T-cell (primary cell): ENCODE measurements at regions of chr6 and their contacts with region 1.

Region 1: DNA sequence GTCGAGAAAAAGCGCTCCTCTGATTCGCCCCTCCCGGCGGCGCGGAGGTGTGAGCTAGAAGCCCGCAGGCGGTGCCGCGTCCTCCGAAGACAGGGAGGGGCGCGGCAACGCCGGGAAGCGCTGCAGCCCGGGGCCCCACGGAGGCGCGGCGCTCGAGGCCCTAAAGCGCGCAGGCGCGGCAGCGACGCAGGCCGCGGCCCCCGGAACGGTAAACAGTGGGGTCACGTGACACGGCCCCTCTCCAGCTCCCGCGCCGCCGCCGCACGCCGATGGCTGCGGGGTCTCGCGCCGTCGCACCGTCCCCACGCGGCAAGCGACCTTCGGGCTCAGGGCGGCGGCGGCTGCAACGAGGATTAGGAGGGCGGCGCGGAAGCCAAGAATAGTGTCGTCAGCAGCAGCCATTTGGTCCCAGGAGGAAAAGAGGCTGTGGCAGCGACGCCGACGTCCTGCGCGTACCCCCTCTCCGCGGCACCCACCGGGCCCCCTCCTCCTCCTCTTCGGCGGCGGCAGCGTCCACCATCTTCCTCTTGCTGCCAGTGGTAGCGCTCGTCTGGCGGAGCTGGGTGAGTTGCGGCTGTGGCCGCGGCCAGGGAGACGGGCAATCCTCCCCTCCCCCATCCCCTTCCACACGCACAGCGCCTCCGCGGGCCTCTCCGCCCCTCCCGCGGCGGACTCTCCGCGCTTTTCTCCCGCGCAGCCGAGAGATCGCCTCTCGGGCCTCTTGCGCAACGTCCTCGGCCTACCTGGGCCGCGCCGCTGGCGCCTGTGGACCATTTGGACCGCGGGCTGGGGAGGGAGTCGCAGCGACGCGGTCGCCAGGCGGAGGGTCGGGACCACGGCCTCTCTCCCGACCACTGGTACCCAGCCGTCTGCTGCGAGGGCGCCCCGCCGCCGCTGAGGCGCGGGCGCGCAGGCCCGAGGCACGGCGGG is at the start of gene PHF3:
- DNase-seq: peak; percentile 76 to 97 (median 89)
- ATAC-seq: peak; percentile 91 to 94 (median 92)
- H3K4me3 ChIP-seq: peak within 1 kb of the TSS; percentile 58 to 96
- H3K4me3 Mint-ChIP-seq: peak within 1 kb of the TSS; percentile 98 to 100 (median 98)
- H3K27ac ChIP-seq: peak within 1 kb of the TSS; percentile 94
- H3K27ac Mint-ChIP-seq: peak within 1 kb of the TSS; percentile 97 to 99
- H3K4me1 ChIP-seq: peaks cover 8 to 33% of the 10 kb centered on the region in 2 experiments
- H3K4me1 Mint-ChIP-seq: peaks cover 47 to 59% (median 51%) of the 10 kb centered on the region in 3 donors
- H3K27me3 ChIP-seq: no peaks in the 10 kb centered on the region
- H3K27me3 Mint-ChIP-seq: no peaks in the 10 kb centered on the region
- total RNA-seq, gene PHF3: 78.5 to 110 (median 93.3) TPM

Region 2: GRCh38 chr6:63353286-63353630 is 282.6 kb before region 1 on chr6:
- CTCF ChIA-PET with region 1: no interaction called
- POLR2A ChIA-PET with region 1: interaction called in 1 of 2 experiments, 11 read pairs
- DNase-seq: no peak
- ATAC-seq: no peak
- H3K4me3 ChIP-seq: no peak overlapping the region
- H3K4me3 Mint-ChIP-seq: no peak overlapping the region
- H3K27ac ChIP-seq: no peak overlapping the region
- H3K27ac Mint-ChIP-seq: no peak overlapping the region
- H3K4me1 ChIP-seq: peaks cover 0 to 3% of the 10 kb centered on the region in 2 experiments
- H3K4me1 Mint-ChIP-seq: peaks cover 9 to 11% (median 11%) of the 10 kb centered on the region in 3 donors
- H3K27me3 ChIP-seq: no peaks in the 10 kb centered on the region
- H3K27me3 Mint-ChIP-seq: peaks cover 7 to 23% of the 10 kb centered on the region in 2 donors

Region 3: DNA sequence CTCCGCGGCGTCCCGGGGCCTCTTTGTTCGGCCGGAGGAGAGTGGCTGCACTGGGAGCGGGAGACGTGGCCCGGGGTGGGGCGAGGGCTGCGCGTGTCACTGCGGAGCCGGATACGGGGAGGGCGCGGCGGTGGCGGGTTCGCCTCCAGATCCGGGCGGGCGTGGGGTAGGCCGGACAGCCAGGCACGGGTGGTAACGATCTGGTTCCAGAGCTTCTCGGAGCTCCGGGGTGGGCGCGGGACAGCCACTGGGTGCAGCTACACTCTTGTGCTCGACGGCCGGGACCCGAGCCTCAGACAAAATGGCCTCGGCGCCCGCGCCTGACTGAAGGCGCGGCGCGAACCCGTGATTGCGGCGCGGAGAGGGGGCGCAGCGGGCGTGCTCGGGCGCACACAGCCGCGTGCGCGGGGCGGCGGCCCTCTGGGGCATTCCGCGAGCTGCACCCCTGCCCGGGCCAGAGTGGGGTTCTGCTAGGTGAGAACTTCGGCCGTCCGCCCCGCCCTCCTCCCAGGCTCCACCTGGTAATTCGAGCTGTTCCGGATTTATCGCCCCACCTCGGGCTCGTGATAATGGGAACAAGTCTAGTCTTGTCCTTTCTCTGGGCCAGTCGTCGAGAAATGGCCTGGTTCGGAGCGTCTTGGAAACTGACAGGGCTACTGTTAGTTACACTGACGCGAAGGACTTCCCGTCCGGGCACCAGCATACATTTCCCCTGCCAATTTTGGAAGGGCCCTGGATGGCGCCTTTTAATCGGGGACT is 62.5 kb before region 1 on chr6:
- CTCF ChIA-PET with region 1: interaction called in 1 of 2 experiments, 7 read pairs
- POLR2A ChIA-PET with region 1: interaction called, 4 to 15 read pairs
- DNase-seq: peak; percentile 28 to 78 (median 56)
- ATAC-seq: peak; percentile 13 to 55 (median 44)
- H3K4me3 ChIP-seq: peak overlapping the region; percentile 73 to 78
- H3K4me3 Mint-ChIP-seq: peak overlapping the region; percentile 90 to 93 (median 91)
- H3K27ac ChIP-seq: peak overlapping the region; percentile 97
- H3K27ac Mint-ChIP-seq: peak overlapping the region; percentile 96
- H3K4me1 ChIP-seq: peaks cover 9 to 13% of the 10 kb centered on the region in 2 experiments
- H3K4me1 Mint-ChIP-seq: peaks cover 29 to 44% (median 40%) of the 10 kb centered on the region in 3 donors
- H3K27me3 ChIP-seq: no peaks in the 10 kb centered on the region
- H3K27me3 Mint-ChIP-seq: no peaks in the 10 kb centered on the region

Region 4: GRCh38 chr6:63663147-63663877 is 27.5 kb after region 1 on chr6:
- CTCF ChIA-PET with region 1: interaction called in 1 of 2 experiments, 4 read pairs
- POLR2A ChIA-PET with region 1: interaction called in 1 of 2 experiments, 10 read pairs
- DNase-seq: no peak
- ATAC-seq: peak in 1 of 4 experiments; percentile 29
- H3K4me3 ChIP-seq: no peak overlapping the region
- H3K4me3 Mint-ChIP-seq: peak overlapping the region in 1 of 3 donors; percentile 46
- H3K27ac ChIP-seq: no peak overlapping the region
- H3K27ac Mint-ChIP-seq: no peak overlapping the region
- H3K4me1 ChIP-seq: peaks cover 20 to 22% of the 10 kb centered on the region in 2 experiments
- H3K4me1 Mint-ChIP-seq: peaks cover 83 to 89% (median 86%) of the 10 kb centered on the region in 3 donors
- H3K27me3 ChIP-seq: no peaks in the 10 kb centered on the region
- H3K27me3 Mint-ChIP-seq: no peaks in the 10 kb centered on the region